ENCODE measurements at regions of chr9 and their contacts with region 1.

Region 1: GRCh38 chr9:75890472-75891276 is at the start of gene PCSK5:
- DNase-seq: peak; percentile 89
- ATAC-seq: peak; percentile 86
- H3K4me3 ChIP-seq: peak within 1 kb of the TSS; percentile 64
- H3K27ac ChIP-seq: peak within 1 kb of the TSS; percentile 80
- H3K4me1 ChIP-seq: no peaks in the 10 kb centered on the region
- H3K27me3 ChIP-seq: no peaks in the 10 kb centered on the region
- CTCF ChIP-seq: peak; percentile 29
- POLR2A ChIP-seq: peak; percentile 78
- RAD21 ChIP-seq: peak; percentile 26; the same call in 1 of the 2 replicates
- total RNA-seq, gene PCSK5: 2.8 and 3.0 TPM in 2 replicates

Region 2: GRCh38 chr9:76044266-76044819 is 153.7 kb after region 1 on chr9:
- CTCF ChIA-PET with region 1: no interaction called
- POLR2A ChIA-PET with region 1: no interaction called
- dilution Hi-C with region 1: no loop called
- in situ Hi-C with region 1: no loop called
- intact Hi-C with region 1: loop called (anchors 10 kb)
- DNase-seq: peak; percentile 24
- ATAC-seq: peak; percentile 84
- H3K4me3 ChIP-seq: no peak overlapping the region
- H3K27ac ChIP-seq: no peak overlapping the region
- H3K4me1 ChIP-seq: no peaks in the 10 kb centered on the region
- H3K27me3 ChIP-seq: no peaks in the 10 kb centered on the region
- CTCF ChIP-seq: no peak
- POLR2A ChIP-seq: no peak
- RAD21 ChIP-seq: no peak

Region 3: GRCh38 chr9:76161541-76161940 is 270.9 kb after region 1 on chr9:
- CTCF ChIA-PET with region 1: no interaction called
- POLR2A ChIA-PET with region 1: no interaction called
- dilution Hi-C with region 1: no loop called
- in situ Hi-C with region 1: no loop called
- intact Hi-C with region 1: loop called (anchors 2 kb)
- DNase-seq: peak; percentile 95
- ATAC-seq: peak; percentile 82
- H3K4me3 ChIP-seq: no peak overlapping the region
- H3K27ac ChIP-seq: peak overlapping the region; percentile 65; the same call in 1 of the 2 replicates
- H3K4me1 ChIP-seq: peaks cover 19% of the 10 kb centered on the region
- H3K27me3 ChIP-seq: no peaks in the 10 kb centered on the region
- CTCF ChIP-seq: no peak
- POLR2A ChIP-seq: no peak
- RAD21 ChIP-seq: no peak

Region 4: GRCh38 chr9:76216161-76216649 is 325.5 kb after region 1 on chr9:
- CTCF ChIA-PET with region 1: no interaction called
- POLR2A ChIA-PET with region 1: no interaction called
- dilution Hi-C with region 1: no loop called
- in situ Hi-C with region 1: no loop called
- intact Hi-C with region 1: loop called (anchors 5 kb)
- DNase-seq: peak; percentile 98
- ATAC-seq: peak; percentile 87
- H3K4me3 ChIP-seq: no peak overlapping the region
- H3K27ac ChIP-seq: peak overlapping the region; percentile 98
- H3K4me1 ChIP-seq: peaks cover 24% of the 10 kb centered on the region
- H3K27me3 ChIP-seq: no peaks in the 10 kb centered on the region
- CTCF ChIP-seq: no peak
- POLR2A ChIP-seq: no peak
- RAD21 ChIP-seq: no peak

Region 5: DNA sequence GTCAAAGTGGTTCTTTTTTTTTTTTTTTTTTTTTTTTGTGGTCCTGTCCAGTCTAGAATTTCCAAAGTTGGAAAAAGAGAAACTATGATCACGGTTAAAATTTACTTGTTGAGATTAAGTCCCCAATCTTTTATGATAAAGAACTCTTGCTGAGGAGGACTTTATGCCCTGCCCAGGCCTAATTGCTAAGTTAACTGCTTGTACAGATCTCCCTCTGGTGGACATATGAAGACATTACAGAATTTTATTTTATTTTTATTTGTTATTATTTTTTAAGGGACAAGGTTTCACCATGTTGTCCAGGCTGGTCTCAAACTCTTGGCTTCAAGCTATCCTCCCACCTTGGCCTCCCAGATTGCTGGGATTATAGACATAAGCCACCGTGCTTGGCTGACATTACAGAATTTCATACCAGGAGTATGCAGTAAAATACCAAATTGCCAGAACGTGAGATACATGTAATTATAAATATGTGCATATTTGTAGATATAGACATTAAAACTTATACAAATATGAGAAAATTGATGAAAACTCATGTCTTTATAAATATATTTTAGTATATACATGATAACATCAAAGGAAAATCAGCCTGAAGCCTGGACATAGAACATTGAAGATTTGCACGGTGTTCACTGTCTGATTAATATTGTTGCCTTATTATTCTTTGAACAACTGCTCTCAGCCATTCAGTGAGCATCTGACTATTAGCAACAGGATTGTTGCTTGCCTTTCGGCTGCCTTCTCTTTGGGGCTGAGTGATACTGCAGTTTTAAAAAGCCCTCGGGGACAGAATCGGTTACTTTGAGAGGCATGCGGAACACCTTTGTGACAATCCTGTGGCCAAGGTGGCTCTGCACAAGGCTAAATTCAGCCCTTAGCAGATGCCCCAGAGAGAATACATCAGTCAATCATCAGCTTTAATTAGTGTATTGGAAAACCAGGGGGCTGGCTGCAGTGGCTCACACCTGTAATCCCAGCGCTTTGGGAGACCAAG is 412.6 kb after region 1 on chr9:
- CTCF ChIA-PET with region 1: interaction called, 3 read pairs
- POLR2A ChIA-PET with region 1: no interaction called
- dilution Hi-C with region 1: no loop called
- in situ Hi-C with region 1: loop called (anchors 10 kb)
- intact Hi-C with region 1: loop called (anchors 2 kb)
- DNase-seq: peak; percentile 72
- ATAC-seq: peak; percentile 79
- H3K4me3 ChIP-seq: no peak overlapping the region
- H3K27ac ChIP-seq: no peak overlapping the region
- H3K4me1 ChIP-seq: peaks cover under 1% of the 10 kb centered on the region; the same call in 1 of the 2 replicates
- H3K27me3 ChIP-seq: no peaks in the 10 kb centered on the region
- CTCF ChIP-seq: peak; percentile 80
- POLR2A ChIP-seq: no peak
- RAD21 ChIP-seq: peak; percentile 94

Region 6: DNA sequence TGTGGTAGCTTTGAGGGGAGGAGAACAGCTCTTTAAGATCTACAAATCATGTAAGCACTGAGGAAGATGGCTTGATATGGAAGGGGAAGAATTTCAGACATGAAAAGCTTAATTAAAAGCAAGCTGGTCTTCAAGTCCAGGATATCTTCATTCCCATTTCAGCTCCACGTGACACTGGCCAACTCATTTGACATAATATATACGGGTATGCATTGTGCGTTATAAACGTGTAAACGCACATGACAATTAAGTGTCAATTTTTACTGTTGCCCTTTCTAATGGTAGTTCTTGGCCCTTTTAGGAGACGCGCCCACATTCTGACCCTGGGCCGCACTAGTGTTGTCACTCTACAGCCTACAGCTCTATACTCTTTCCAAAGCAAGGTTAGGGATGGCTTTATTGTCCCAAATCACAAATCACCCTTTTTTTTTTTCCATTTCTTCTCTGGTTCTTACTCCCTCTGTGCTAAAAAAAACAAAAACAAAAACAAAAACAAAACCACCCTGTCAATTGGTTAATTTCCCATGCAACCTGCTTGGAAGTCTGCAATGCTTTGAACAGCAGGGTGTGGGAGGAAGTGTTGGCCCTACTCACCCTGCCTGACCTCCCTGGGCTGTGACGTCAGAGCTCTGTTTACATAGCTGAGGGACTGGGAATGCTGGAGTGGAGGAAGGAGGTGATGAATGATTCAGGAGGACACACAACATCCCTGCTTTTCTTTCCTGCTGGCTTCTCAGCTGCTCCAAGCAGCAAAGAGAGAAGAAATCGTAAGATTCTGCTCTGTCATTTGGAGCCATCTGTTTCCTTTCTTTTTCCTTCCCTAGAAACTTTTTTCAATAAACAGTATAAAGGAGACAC is 484.3 kb after region 1 on chr9:
- CTCF ChIA-PET with region 1: no interaction called
- POLR2A ChIA-PET with region 1: no interaction called
- dilution Hi-C with region 1: no loop called
- in situ Hi-C with region 1: no loop called
- intact Hi-C with region 1: loop called (anchors 5 kb)
- DNase-seq: peak; percentile 96
- ATAC-seq: peak; percentile 81
- H3K4me3 ChIP-seq: no peak overlapping the region
- H3K27ac ChIP-seq: peak overlapping the region; percentile 42; the same call in 1 of the 2 replicates
- H3K4me1 ChIP-seq: peaks cover 15% of the 10 kb centered on the region
- H3K27me3 ChIP-seq: no peaks in the 10 kb centered on the region
- CTCF ChIP-seq: no peak
- POLR2A ChIP-seq: no peak
- RAD21 ChIP-seq: no peak

Region 7: DNA sequence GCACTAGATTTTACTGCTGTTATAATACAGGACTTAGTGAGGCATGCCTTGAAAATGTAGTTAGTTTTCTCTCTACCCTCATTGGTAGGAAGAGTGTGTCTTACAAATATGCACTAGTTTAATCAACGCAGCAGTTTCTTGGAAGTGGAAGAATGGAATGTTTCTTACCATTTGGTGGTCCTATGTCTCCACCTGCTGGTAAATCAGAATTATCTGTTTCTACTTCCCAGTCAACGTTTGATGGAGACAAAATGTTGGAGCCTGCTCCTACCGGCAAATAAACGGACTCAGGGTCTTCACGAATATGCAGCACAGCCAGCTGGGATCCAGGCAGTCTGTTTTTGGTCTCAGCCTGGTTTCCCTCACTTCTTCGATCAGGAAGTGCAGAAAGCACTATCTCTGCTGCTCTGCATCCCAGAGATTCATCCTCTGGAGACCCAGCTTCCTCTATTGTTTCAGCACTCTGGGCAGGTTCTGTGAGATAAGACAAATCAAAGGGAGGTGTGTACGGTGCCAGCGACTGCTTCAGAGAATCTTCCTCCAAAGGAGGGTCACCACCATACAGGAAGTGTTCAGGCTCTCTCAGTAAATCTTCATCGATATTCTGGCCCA is 814.0 kb after region 1 on chr9:
- CTCF ChIA-PET with region 1: no interaction called
- POLR2A ChIA-PET with region 1: no interaction called
- dilution Hi-C with region 1: no loop called
- in situ Hi-C with region 1: loop called (anchors 25 kb)
- intact Hi-C with region 1: no loop called
- DNase-seq: peak; percentile 93
- ATAC-seq: peak; percentile 82
- H3K4me3 ChIP-seq: no peak overlapping the region
- H3K27ac ChIP-seq: no peak overlapping the region
- H3K4me1 ChIP-seq: no peaks in the 10 kb centered on the region
- H3K27me3 ChIP-seq: peaks cover 31% of the 10 kb centered on the region
- CTCF ChIP-seq: peak; percentile 88
- POLR2A ChIP-seq: no peak
- RAD21 ChIP-seq: peak; percentile 95